ENCODE measurements at regions of chr6 and their contacts with region 1.

Region 1: DNA sequence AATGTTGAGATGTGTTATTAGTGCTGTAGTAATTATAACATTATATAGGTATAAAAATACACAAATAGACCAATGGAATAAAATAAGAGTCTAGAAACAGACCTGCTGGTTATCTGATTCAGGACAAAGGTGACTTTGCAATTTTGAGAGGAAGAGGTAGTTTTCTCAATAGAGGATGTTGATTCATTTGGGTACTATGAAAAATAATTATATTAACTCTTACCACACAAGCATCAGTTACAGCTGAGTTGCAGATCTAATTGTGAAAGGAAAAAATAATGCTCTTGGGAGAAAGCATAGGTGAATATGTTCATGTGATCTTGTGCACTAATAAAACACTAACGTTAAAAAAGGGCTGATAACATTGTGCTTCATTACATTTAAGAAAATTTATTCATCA is 103.0 kb downstream of the BCKDHB start:
- DNase-seq: no peak
- ATAC-seq: no peak

Region 2: GRCh38 chr6:80143419-80143937 is 66.0 kb before region 1 on chr6:
- intact Hi-C with region 1: loop called in 1 of 2 experiments (anchors 10 kb)
- DNase-seq: peak; percentile 86
- ATAC-seq: peak; percentile 74 to 86

Region 3: GRCh38 chr6:80250391-80250997 is 41.1 kb after region 1 on chr6:
- intact Hi-C with region 1: no loop called
- DNase-seq: no peak
- ATAC-seq: no peak